ENCODE measurements at regions of chr5 and their contacts with region 1.

Region 1: GRCh38 chr5:6279607-6280006 is 98.7 kb downstream of the MED10 start:
- DNase-seq: no peak
- ATAC-seq: no peak
- H3K4me3 ChIP-seq: no peak overlapping the region
- H3K27ac ChIP-seq: no peak overlapping the region
- H3K4me1 ChIP-seq: peaks cover 5% of the 10 kb centered on the region
- H3K27me3 ChIP-seq: no peaks in the 10 kb centered on the region
- CTCF ChIP-seq: no peak
- EP300 ChIP-seq: no peak
- POLR2A ChIP-seq: no peak
- RAD21 ChIP-seq: no peak

Region 2: GRCh38 chr5:5533927-5534326 is 745.7 kb before region 1 on chr5:
- CTCF ChIA-PET with region 1: no interaction called
- POLR2A ChIA-PET with region 1: interaction called, 10 read pairs
- RAD21 ChIA-PET with region 1: no interaction called
- SMC1A ChIA-PET with region 1: no interaction called
- in situ Hi-C with region 1: no loop called
- intact Hi-C with region 1: no loop called
- DNase-seq: no peak
- ATAC-seq: no peak
- H3K4me3 ChIP-seq: no peak overlapping the region
- H3K27ac ChIP-seq: no peak overlapping the region
- H3K4me1 ChIP-seq: no peaks in the 10 kb centered on the region
- H3K27me3 ChIP-seq: no peaks in the 10 kb centered on the region
- CTCF ChIP-seq: no peak
- EP300 ChIP-seq: no peak
- POLR2A ChIP-seq: no peak
- RAD21 ChIP-seq: no peak

Region 3: DNA sequence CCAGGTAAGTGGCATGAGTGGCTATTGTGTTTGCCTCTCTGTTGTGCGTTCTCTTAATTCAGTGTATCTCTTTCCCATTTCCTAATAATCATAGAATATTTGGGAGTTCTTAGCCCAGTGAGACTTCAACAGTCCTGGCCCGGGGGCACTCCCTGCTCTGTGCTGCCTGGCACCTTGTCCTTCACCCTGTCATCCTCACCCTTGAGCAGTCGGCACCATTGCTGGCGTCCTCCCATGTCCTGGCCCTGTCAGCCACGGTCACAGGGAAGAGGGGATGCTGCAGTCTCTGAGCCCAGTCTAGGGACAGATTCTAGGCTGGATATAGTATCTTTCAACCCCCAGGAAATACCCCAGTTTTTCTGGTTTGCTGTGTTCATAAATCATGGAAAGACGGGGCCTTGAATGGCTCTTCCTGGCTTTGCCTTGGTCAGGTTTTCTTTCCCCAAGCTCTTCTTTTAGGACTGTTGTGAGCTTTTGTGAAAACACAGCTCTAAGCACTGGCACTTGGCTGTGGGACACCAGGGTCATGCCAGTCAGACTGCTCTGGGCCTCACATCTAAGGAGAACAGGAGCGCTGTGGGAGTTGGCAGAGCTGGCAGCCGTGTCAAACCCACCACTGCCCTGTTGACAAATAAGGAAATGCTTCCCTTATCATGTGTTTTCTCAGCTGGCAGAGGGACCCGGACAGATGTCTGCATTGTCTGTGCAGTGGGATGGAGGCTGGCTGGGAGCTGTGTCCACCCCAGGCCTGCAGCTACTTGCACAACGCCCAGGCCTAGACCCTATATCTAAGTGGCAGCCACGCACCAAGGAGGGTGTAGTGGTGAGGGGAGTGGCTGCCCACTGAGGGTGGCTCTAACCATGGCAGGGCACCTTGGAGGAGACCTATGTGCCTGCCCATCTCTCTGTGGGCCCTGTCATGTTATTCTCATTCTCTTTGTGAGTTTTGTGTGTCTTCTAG is 478.5 kb before region 1 on chr5:
- CTCF ChIA-PET with region 1: no interaction called
- POLR2A ChIA-PET with region 1: no interaction called
- RAD21 ChIA-PET with region 1: no interaction called
- SMC1A ChIA-PET with region 1: no interaction called
- in situ Hi-C with region 1: no loop called
- intact Hi-C with region 1: no loop called
- DNase-seq: no peak
- ATAC-seq: no peak
- H3K4me3 ChIP-seq: no peak overlapping the region
- H3K27ac ChIP-seq: no peak overlapping the region
- H3K4me1 ChIP-seq: no peaks in the 10 kb centered on the region
- H3K27me3 ChIP-seq: no peaks in the 10 kb centered on the region
- CTCF ChIP-seq: no peak
- EP300 ChIP-seq: no peak
- POLR2A ChIP-seq: no peak
- RAD21 ChIP-seq: no peak

Region 4: DNA sequence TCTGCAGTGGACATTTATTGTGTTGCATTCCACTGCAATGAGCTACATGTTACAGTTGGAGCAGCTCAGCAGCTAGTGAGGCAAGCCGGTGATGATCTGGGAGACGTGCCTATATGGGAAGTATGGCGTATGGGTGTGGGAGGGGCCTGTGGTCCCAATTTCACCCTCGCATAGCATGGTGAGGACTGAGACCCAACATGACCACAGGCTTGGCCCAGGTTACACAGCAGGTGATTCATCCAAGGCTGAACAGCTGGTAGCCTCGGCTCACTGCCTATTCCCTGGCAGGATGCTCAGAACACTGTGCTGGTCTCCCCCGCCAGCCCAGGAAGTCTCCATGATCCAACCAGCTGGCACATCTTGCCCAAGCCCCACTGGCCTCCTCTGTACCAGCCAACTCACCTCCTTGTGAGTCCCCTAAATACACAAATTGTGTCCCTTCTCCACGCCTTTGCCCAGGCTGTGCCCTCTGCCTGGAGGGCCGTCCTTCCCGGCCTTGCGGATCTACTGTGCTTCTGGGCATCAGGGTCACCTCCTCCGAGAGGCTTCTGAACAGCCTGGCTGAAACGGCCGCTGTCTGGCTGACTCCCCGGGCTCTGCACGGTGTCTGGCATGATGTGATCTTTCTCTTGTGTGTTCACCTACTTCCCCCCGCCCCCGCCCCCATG is 271.8 kb after region 1 on chr5:
- CTCF ChIA-PET with region 1: no interaction called
- POLR2A ChIA-PET with region 1: no interaction called
- RAD21 ChIA-PET with region 1: no interaction called
- SMC1A ChIA-PET with region 1: no interaction called
- in situ Hi-C with region 1: no loop called
- intact Hi-C with region 1: no loop called
- DNase-seq: no peak
- ATAC-seq: no peak
- H3K4me3 ChIP-seq: no peak overlapping the region
- H3K27ac ChIP-seq: no peak overlapping the region
- H3K4me1 ChIP-seq: no peaks in the 10 kb centered on the region
- H3K27me3 ChIP-seq: peaks cover 0 to 1% of the 10 kb centered on the region in 2 experiments; a peak in 1 of 4 replicates
- CTCF ChIP-seq: no peak
- EP300 ChIP-seq: no peak
- POLR2A ChIP-seq: no peak
- RAD21 ChIP-seq: no peak